Ascending aorta (tissue), 2 donors: ENCODE measurements at regions of chr12 and their contacts with region 1.

Region 1: DNA sequence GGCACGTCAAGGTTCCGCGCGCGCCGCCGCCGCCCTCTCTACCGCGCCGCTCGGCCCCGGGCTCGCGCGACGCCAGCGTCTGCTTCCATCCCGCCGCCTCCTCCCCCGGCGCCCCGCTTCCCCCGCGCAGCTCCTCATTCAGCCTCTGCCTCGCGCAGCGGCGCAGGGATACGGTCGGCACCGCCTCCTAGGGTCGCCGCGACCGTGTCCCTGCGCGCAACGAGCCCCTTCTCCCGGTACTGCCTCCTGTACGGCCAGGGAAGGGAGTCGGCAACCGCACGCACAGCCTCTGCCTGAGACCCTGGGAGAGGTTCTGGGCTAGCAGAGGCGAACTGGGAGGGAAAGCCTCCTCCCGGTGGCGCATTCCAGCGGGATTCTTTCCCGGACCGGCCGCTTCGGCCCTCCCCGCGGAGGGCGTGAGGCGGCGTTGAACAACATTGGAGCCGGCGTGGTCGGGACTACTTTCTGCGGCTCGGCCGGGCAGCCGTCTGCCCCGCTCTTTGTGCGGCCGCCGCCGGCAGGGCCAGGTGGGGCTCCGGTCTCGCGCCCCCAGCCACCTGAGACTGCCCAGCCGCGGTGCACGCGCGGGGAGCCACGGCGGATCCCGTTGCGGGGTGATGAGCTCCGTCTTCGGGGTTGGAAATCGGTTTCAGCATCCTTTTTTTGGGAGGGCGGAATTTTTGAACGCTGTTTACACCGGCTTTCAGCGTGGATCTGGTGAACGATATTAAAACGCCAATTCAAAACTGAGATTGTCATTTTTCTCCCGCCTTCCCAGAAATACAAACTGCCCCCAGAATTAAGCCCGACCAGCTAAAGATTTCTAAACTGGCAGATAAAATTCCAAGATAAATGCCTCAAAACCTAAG is at the start of gene LRP6:
- DNase-seq: peak; percentile 35 to 92
- H3K4me3 ChIP-seq: peak within 1 kb of the TSS; percentile 63 to 87
- H3K27ac ChIP-seq: peak within 1 kb of the TSS; percentile 99
- H3K4me1 ChIP-seq: peaks cover 0 to 4% of the 10 kb centered on the region in 2 donors
- H3K27me3 ChIP-seq: no peaks in the 10 kb centered on the region
- CTCF ChIP-seq: no peak
- total RNA-seq, gene LRP6: 70.0 TPM

Region 2: DNA sequence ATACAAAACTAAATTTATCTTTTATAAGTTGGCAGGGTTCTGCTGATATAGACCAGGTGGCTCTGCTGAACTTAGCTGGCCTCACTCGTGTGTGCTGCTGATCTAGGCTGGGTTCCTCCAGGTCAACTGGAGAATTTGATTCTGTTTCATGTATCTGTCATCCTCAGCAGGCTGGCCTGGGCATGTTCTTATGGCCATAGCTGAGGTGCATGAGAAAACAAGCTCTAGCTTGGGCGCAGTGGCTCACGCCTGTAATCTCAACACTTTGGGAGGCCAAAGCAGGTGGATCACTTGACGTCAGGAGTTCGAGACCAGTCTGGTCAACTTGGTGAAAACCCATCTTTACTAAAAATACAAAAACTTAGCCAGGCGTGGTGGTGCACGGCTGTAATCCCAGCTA is 220.7 kb before region 1 on chr12:
- intact Hi-C with region 1: no loop called
- DNase-seq: no peak
- H3K4me3 ChIP-seq: no peak overlapping the region
- H3K27ac ChIP-seq: no peak overlapping the region
- H3K4me1 ChIP-seq: no peaks in the 10 kb centered on the region
- H3K27me3 ChIP-seq: no peaks in the 10 kb centered on the region
- CTCF ChIP-seq: no peak

Region 3: DNA sequence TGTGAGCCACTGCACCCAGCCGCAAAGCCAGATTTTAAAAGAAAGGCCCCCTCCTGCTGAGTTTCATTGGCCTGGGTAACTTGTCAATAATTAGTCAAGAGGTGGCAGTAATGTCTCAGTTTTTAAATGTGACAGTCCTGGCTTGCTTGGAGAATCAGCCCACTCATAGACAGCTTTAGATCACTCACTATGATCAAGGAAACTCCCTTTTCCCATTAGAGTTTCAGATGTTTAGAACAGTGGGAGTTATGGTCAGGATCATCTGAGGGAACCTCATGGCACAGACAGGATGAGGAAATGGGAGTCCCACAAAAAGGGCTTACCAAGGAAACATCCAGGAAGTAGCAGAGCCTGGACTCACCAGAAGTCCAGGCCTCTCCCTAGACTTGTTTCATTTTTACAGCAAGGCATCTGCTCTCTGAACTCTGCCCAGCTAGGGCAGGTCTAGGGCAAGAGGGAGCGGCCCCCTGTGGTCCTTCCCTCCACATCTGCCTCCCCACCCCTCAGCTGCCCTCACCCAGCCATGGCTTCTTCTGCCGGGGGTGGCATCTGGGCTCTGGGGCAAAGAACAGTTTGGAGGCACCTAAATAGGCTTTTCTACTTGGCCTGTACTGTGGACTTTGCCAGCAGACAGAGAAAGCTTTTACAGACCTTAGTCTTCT is 185.1 kb before region 1 on chr12:
- intact Hi-C with region 1: loop called (anchors 5 kb)
- DNase-seq: no peak
- H3K4me3 ChIP-seq: no peak overlapping the region
- H3K27ac ChIP-seq: peak overlapping the region; percentile 64 to 74
- H3K4me1 ChIP-seq: no peaks in the 10 kb centered on the region
- H3K27me3 ChIP-seq: no peaks in the 10 kb centered on the region
- CTCF ChIP-seq: peak in 2 of 3 experiments; percentile 26 to 52

Region 4: DNA sequence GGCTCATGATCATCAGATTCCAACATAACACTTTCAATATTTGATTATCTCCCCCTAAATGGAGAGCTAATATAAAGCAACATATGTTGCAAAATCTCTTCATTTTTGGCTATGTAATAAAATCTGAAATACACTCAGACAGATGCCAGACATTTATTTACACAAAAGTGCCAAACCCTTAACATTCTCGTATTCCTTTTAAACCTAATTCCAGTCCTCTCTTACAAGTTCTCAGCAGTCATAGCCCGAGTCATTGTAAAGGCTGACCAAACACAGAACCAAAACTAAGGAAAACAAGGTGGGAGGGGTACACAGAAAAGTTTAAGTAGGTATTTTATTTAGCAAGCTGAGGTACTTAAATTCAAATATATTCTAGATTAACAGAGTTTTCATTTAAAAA is 81.7 kb before region 1 on chr12:
- intact Hi-C with region 1: loop called (anchors 2 kb)
- DNase-seq: no peak
- H3K4me3 ChIP-seq: no peak overlapping the region
- H3K27ac ChIP-seq: peak overlapping the region; percentile 36 to 47
- H3K4me1 ChIP-seq: peaks cover 5 to 44% of the 10 kb centered on the region in 2 donors
- H3K27me3 ChIP-seq: no peaks in the 10 kb centered on the region
- CTCF ChIP-seq: no peak

Region 5: DNA sequence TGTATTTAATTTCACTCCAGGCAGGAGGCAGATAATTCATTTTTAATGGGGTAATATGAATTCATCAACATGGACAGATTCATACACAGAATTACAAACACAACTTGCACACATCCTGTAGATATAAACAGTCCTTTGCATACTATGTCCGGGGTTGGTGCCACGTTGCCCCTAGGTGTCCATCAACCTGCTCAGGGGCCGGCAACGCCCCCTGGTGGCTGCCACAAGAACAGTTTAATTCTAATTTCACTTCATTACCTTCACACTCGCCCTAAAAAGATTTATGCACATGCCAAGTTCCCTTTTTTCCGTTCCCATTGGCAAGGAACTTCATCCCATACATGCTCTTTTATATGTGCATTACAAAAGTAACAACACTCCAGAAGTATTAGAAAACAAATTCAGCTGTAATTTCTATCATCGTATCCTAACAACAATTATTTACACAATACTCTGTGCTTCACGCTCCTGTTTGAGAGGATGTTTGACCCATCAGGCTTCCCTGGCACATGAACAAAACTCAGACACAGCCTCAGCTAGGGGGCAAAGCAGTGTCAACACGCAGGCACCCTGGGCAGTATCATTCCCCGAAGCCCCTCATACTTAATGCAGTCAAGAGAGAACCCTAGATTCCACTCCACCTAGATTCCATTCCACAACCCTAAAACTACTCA is 67.4 kb after region 1 on chr12:
- intact Hi-C with region 1: loop called (anchors 5 kb)
- DNase-seq: peak in 1 of 2 donors; percentile 56
- H3K4me3 ChIP-seq: no peak overlapping the region
- H3K27ac ChIP-seq: peak overlapping the region; percentile 24 to 51
- H3K4me1 ChIP-seq: peaks cover 9 to 33% of the 10 kb centered on the region in 2 donors
- H3K27me3 ChIP-seq: no peaks in the 10 kb centered on the region
- CTCF ChIP-seq: peak; percentile 47 to 67 (median 60)

Region 6: GRCh38 chr12:12356886-12357718 is 90.0 kb after region 1 on chr12 and contains the start of gene BORCS5:
- intact Hi-C with region 1: loop called (anchors 1 kb)
- DNase-seq: peak; percentile 92 to 99
- H3K4me3 ChIP-seq: peak within 1 kb of the TSS; percentile 74 to 82
- H3K27ac ChIP-seq: peak within 1 kb of the TSS; percentile 91 to 98
- H3K4me1 ChIP-seq: peaks cover 0 to 14% of the 10 kb centered on the region in 2 donors
- H3K27me3 ChIP-seq: no peaks in the 10 kb centered on the region
- CTCF ChIP-seq: peak in 2 of 3 experiments; percentile 21 to 24
- total RNA-seq, gene BORCS5: 3.0 TPM

Region 7: GRCh38 chr12:12611512-12612306 is 344.6 kb after region 1 on chr12 and contains the start of gene CREBL2:
- intact Hi-C with region 1: loop called (anchors 5 kb)
- DNase-seq: peak; percentile 83 to 97
- H3K4me3 ChIP-seq: peak within 1 kb of the TSS; percentile 76 to 83
- H3K27ac ChIP-seq: peak within 1 kb of the TSS; percentile 91 to 94
- H3K4me1 ChIP-seq: peaks cover 3 to 16% of the 10 kb centered on the region in 2 donors
- H3K27me3 ChIP-seq: no peaks in the 10 kb centered on the region
- CTCF ChIP-seq: no peak
- total RNA-seq, gene CREBL2: 19.4 TPM

Region 8: DNA sequence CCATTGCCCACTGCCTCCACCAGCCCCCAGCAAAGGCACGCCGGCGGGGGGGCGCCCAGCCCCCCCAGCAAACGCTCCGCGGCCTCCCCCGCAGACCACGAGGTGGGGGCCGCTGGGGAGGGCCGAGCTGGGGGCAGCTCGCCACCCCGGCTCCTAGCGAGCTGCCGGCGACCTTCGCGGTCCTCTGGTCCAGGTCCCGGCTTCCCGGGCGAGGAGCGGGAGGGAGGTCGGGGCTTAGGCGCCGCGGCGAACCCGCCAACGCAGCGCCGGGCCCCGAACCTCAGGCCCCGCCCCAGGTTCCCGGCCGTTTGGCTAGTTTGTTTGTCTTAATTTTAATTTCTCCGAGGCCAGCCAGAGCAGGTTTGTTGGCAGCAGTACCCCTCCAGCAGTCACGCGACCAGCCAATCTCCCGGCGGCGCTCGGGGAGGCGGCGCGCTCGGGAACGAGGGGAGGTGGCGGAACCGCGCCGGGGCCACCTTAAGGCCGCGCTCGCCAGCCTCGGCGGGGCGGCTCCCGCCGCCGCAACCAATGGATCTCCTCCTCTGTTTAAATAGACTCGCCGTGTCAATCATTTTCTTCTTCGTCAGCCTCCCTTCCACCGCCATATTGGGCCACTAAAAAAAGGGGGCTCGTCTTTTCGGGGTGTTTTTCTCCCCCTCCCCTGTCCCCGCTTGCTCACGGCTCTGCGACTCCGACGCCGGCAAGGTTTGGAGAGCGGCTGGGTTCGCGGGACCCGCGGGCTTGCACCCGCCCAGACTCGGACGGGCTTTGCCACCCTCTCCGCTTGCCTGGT is 449.9 kb after region 1 on chr12 and contains the start of gene CDKN1B:
- intact Hi-C with region 1: loop called (anchors 5 kb)
- DNase-seq: peak; percentile 76 to 96
- H3K4me3 ChIP-seq: peak within 1 kb of the TSS; percentile 75 to 88
- H3K27ac ChIP-seq: peak within 1 kb of the TSS; percentile 96 to 99
- H3K4me1 ChIP-seq: peaks cover 3 to 34% of the 10 kb centered on the region in 2 donors
- H3K27me3 ChIP-seq: no peaks in the 10 kb centered on the region
- CTCF ChIP-seq: no peak
- total RNA-seq, gene CDKN1B: 65.1 TPM